ENCODE measurements at regions of chr21 and their contacts with region 1.

Region 1: DNA sequence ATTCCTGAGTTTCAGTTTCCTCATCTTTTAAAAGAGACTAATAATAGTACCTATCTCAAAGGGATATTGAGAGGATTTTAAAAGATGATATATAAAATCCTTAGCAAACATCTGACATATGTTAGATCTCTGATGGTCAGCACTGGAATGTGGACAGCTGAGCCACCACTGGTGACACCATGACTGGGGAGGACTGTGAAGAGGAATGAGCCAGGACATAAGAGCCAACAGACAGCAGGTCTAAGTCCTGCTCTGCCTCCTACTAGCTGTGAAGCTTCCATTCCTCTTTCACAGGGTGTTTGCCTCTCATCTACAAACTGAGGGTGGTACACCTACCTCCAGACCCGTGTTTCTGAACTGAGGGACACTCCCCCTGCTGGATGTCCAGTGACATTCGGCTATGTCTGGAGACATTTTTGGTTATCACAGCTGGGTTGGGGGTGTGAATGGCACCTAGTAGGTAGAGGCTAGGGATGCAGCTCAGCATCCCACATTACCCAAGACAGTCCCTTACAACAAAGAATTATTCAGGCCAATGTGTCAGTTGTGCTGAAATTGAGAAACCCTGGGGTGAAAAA is 109.1 kb upstream of the OLIG2 start:
- DNase-seq: no peak
- H3K4me3 ChIP-seq: no peak overlapping the region
- H3K4me3 Mint-ChIP-seq: no peak overlapping the region
- H3K27ac ChIP-seq: no peak overlapping the region
- H3K27ac Mint-ChIP-seq: peak overlapping the region in 2 of 7 donors; percentile 13 to 33
- H3K4me1 ChIP-seq: peaks cover 32% of the 10 kb centered on the region
- H3K4me1 Mint-ChIP-seq: peaks cover 23 to 46% (median 34%) of the 10 kb centered on the region in 4 donors
- H3K27me3 ChIP-seq: no peaks in the 10 kb centered on the region
- H3K27me3 Mint-ChIP-seq: no peaks in the 10 kb centered on the region

Region 2: DNA sequence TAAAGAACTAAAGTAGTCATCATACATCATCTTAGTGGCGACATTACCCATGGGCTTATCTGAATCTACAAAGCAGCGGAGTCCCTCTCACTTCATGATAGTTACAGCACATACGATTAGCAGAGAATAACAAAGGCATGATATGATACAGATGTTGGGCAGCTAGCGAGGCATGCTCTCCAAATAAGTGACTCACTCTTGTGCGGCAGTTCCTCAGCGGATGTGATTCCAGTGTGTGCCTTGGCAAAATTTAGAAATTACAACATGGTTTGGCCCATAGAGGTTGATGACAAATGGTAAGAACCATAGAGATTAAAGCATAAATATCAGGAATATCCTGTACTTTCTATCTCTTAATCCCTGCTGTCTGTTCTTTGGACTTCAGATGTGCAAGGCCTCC is 96.9 kb before region 1 on chr21:
- CTCF ChIA-PET with region 1: no interaction called
- POLR2A ChIA-PET with region 1: no interaction called
- intact Hi-C with region 1: no loop called
- DNase-seq: no peak
- H3K4me3 ChIP-seq: no peak overlapping the region
- H3K4me3 Mint-ChIP-seq: no peak overlapping the region
- H3K27ac ChIP-seq: no peak overlapping the region
- H3K27ac Mint-ChIP-seq: no peak overlapping the region
- H3K4me1 ChIP-seq: no peaks in the 10 kb centered on the region
- H3K4me1 Mint-ChIP-seq: no peaks in the 10 kb centered on the region
- H3K27me3 ChIP-seq: no peaks in the 10 kb centered on the region
- H3K27me3 Mint-ChIP-seq: no peaks in the 10 kb centered on the region

Region 3: GRCh38 chr21:32929633-32930038 is 13.0 kb after region 1 on chr21:
- CTCF ChIA-PET with region 1: interaction called, 7 read pairs
- POLR2A ChIA-PET with region 1: interaction called, 10 read pairs
- intact Hi-C with region 1: loop called (anchors 1 kb)
- DNase-seq: no peak
- H3K4me3 ChIP-seq: no peak overlapping the region
- H3K4me3 Mint-ChIP-seq: peak overlapping the region in 7 of 8 donors; percentile 29 to 70 (median 52)
- H3K27ac ChIP-seq: no peak overlapping the region
- H3K27ac Mint-ChIP-seq: peak overlapping the region in 5 of 7 donors; percentile 6 to 71 (median 49)
- H3K4me1 ChIP-seq: peaks cover 46% of the 10 kb centered on the region
- H3K4me1 Mint-ChIP-seq: peaks cover 21 to 42% (median 30%) of the 10 kb centered on the region in 4 donors
- H3K27me3 ChIP-seq: no peaks in the 10 kb centered on the region
- H3K27me3 Mint-ChIP-seq: no peaks in the 10 kb centered on the region